ENCODE measurements at regions of chr6 and their contacts with region 1.

Region 1: DNA sequence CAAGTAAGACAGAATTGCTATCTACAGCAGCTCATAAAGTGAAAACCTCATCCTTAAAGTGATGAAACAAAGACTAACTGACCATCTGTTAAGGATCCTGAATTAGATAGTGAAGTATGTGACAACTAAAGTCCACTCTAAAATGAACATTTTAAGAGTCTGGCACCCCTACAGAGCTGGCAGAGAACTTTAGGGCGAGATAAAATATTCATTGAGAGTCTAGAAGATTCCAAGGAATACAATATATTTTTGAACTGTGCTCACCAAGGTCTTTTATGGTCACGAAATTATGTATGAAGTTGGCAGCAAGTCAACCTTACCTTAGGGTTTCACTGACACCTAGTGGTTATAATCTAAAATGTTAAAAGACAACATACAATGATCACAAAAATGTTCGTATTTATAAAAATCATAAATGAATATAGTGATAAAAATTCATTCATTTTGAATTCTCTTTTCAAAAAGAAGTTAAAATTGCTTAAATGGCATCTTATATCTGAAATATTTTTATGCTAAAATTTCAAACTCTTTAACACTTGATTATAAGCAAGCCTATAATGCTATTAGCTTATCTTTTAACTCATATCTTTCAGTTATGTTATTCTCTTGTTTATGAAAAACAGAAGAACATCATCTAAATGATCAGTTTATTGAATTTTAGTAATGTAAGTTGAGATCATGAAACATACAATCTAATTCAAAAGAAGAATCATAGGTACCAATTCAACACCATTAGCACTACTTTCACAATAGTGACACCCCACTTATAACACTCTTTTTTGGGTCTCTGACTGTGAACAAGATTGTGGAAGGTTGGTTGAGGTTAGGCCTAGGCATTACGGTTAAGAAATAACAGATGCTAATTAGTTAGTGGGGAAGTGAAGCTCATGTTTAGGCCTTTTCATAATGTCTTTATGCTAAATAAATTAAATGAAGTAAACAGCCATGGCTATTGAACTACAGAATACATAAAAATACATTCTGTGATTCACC is 27.5 kb downstream of the RSPH3 start:
- DNase-seq: peak in 2 of 9 experiments; percentile 70 to 78
- ATAC-seq: peak; percentile 63
- H3K4me3 ChIP-seq: no peak overlapping the region
- H3K4me3 Mint-ChIP-seq: no peak overlapping the region
- H3K27ac ChIP-seq: no peak overlapping the region
- H3K27ac Mint-ChIP-seq: no peak overlapping the region
- H3K4me1 ChIP-seq: no peaks in the 10 kb centered on the region
- H3K4me1 Mint-ChIP-seq: no peaks in the 10 kb centered on the region
- H3K27me3 ChIP-seq: no peaks in the 10 kb centered on the region
- H3K27me3 Mint-ChIP-seq: no peaks in the 10 kb centered on the region
- CTCF ChIP-seq: peak; percentile 73

Region 2: GRCh38 chr6:158213925-158214674 is 758.4 kb before region 1 on chr6:
- CTCF ChIA-PET with region 1: interaction called, 6 read pairs
- POLR2A ChIA-PET with region 1: no interaction called
- intact Hi-C with region 1: loop called (anchors 5 kb)
- DNase-seq: peak; percentile 9 to 77 (median 46)
- ATAC-seq: peak; percentile 99
- H3K4me3 ChIP-seq: no peak overlapping the region
- H3K4me3 Mint-ChIP-seq: no peak overlapping the region
- H3K27ac ChIP-seq: no peak overlapping the region
- H3K27ac Mint-ChIP-seq: no peak overlapping the region
- H3K4me1 ChIP-seq: no peaks in the 10 kb centered on the region
- H3K4me1 Mint-ChIP-seq: no peaks in the 10 kb centered on the region
- H3K27me3 ChIP-seq: no peaks in the 10 kb centered on the region
- H3K27me3 Mint-ChIP-seq: no peaks in the 10 kb centered on the region
- CTCF ChIP-seq: peak; percentile 84

Region 3: GRCh38 chr6:158697811-158698210 is 274.7 kb before region 1 on chr6:
- CTCF ChIA-PET with region 1: interaction called, 140 read pairs
- POLR2A ChIA-PET with region 1: interaction called, 3 read pairs
- intact Hi-C with region 1: no loop called
- DNase-seq: no peak
- ATAC-seq: no peak
- H3K4me3 ChIP-seq: no peak overlapping the region
- H3K4me3 Mint-ChIP-seq: no peak overlapping the region
- H3K27ac ChIP-seq: no peak overlapping the region
- H3K27ac Mint-ChIP-seq: no peak overlapping the region
- H3K4me1 ChIP-seq: no peaks in the 10 kb centered on the region
- H3K4me1 Mint-ChIP-seq: peaks cover 2% of the 10 kb centered on the region
- H3K27me3 ChIP-seq: no peaks in the 10 kb centered on the region
- H3K27me3 Mint-ChIP-seq: no peaks in the 10 kb centered on the region
- CTCF ChIP-seq: no peak

Region 4: GRCh38 chr6:158758451-158758861 is 214.1 kb before region 1 on chr6:
- CTCF ChIA-PET with region 1: interaction called, 14 read pairs
- POLR2A ChIA-PET with region 1: no interaction called
- intact Hi-C with region 1: no loop called
- DNase-seq: no peak
- ATAC-seq: no peak
- H3K4me3 ChIP-seq: no peak overlapping the region
- H3K4me3 Mint-ChIP-seq: no peak overlapping the region
- H3K27ac ChIP-seq: no peak overlapping the region
- H3K27ac Mint-ChIP-seq: no peak overlapping the region
- H3K4me1 ChIP-seq: no peaks in the 10 kb centered on the region
- H3K4me1 Mint-ChIP-seq: no peaks in the 10 kb centered on the region
- H3K27me3 ChIP-seq: no peaks in the 10 kb centered on the region
- H3K27me3 Mint-ChIP-seq: no peaks in the 10 kb centered on the region
- CTCF ChIP-seq: no peak

Region 5: GRCh38 chr6:158819213-158819909 is 153.2 kb before region 1 on chr6 and contains the start of gene EZR:
- CTCF ChIA-PET with region 1: interaction called, 3 read pairs
- POLR2A ChIA-PET with region 1: no interaction called
- intact Hi-C with region 1: loop called in 1 of 2 experiments (anchors 5 kb)
- DNase-seq: peak; percentile 75 to 95 (median 88)
- ATAC-seq: peak; percentile 63
- H3K4me3 ChIP-seq: peak within 1 kb of the TSS; percentile 49 to 83
- H3K4me3 Mint-ChIP-seq: peak within 1 kb of the TSS; percentile 98
- H3K27ac ChIP-seq: peak within 1 kb of the TSS; percentile 89 to 91
- H3K27ac Mint-ChIP-seq: peak within 1 kb of the TSS; percentile 97
- H3K4me1 ChIP-seq: peaks cover 27% of the 10 kb centered on the region
- H3K4me1 Mint-ChIP-seq: peaks cover 43% of the 10 kb centered on the region
- H3K27me3 ChIP-seq: no peaks in the 10 kb centered on the region
- H3K27me3 Mint-ChIP-seq: no peaks in the 10 kb centered on the region
- CTCF ChIP-seq: no peak
- total RNA-seq, gene EZR: 626 to 627 TPM

Region 6: GRCh38 chr6:158958504-158959386 is 13.8 kb before region 1 on chr6:
- CTCF ChIA-PET with region 1: interaction called, 18 read pairs
- POLR2A ChIA-PET with region 1: interaction called, 4 read pairs
- intact Hi-C with region 1: no loop called
- DNase-seq: peak in 5 of 9 experiments; percentile 21 to 47 (median 35)
- ATAC-seq: peak; percentile 65
- H3K4me3 ChIP-seq: no peak overlapping the region
- H3K4me3 Mint-ChIP-seq: no peak overlapping the region
- H3K27ac ChIP-seq: no peak overlapping the region
- H3K27ac Mint-ChIP-seq: no peak overlapping the region
- H3K4me1 ChIP-seq: no peaks in the 10 kb centered on the region
- H3K4me1 Mint-ChIP-seq: no peaks in the 10 kb centered on the region
- H3K27me3 ChIP-seq: no peaks in the 10 kb centered on the region
- H3K27me3 Mint-ChIP-seq: no peaks in the 10 kb centered on the region
- CTCF ChIP-seq: peak; percentile 21